Vagina (tissue), 2 donors: ENCODE measurements at regions of chr16 and their contacts with region 1.

Region 1: DNA sequence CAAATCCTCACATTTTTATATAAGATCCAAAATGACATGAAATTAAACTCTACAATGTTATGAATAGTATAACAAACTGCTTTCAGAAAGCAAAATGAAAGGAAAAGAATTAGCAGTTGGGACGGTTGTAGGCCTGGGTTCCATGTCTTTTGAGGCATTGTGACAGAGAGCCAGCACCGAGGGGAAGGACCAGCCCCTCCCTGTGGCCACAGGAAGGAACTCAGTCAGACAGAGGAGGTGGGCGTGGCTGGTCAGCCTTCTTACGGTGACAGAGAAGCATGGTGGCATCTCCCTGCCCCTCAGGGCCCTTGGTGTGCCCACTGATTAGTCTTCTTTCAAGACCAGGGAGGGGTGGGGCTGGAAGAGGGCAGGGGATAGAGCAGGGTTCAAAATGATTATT is 5.7 kb downstream of the ZNF319 start:
- DNase-seq: no peak
- H3K4me3 ChIP-seq: no peak overlapping the region
- H3K27ac ChIP-seq: no peak overlapping the region
- H3K4me1 ChIP-seq: peaks cover 33% of the 10 kb centered on the region
- H3K27me3 ChIP-seq: no peaks in the 10 kb centered on the region
- CTCF ChIP-seq: peak in 1 of 3 experiments; percentile 11
- POLR2A ChIP-seq: no peak

Region 2: DNA sequence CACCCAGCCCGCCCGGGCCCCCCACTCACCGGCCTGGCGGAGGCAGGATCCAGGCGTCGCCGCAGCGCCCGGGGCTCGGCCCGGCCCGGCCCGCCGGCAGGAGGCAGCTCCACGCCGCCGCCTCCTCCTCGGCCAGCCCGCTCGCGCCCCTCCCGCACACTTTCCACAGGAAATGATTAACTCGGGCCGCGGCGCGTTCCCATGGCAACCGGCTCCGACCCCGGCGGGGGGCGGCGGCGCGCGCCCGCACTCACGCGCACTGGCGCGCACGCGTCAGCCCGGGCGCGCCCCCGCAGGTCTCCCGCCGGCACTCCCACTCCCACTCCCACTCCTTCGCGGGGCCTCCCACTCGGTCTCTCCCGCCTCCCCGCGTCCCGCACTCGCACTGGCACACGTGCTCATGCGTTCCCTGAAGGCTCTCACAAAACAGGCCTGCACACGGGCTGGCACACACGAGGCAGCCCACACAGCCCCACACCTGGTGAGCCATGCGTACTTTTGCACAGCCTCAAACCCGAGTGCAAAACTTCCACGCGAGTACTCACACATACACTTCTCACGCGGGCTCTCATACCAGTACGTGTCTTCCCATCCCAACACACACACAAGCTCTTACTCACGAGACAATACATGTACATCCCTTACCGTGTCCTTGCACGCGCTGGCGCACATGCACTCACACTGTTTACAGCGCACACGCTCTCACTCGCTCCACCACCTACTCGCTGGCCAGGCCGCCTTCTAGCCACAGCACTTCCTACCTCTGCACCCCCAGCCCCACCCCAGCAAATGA is 192.2 kb before region 1 on chr16 and contains the start of gene KIFC3:
- intact Hi-C with region 1: loop called (anchors 5 kb)
- DNase-seq: no peak
- H3K4me3 ChIP-seq: peak within 1 kb of the TSS; percentile 69 to 74
- H3K27ac ChIP-seq: peak within 1 kb of the TSS; percentile 93
- H3K4me1 ChIP-seq: peaks cover 61% of the 10 kb centered on the region
- H3K27me3 ChIP-seq: no peaks in the 10 kb centered on the region
- CTCF ChIP-seq: no peak
- POLR2A ChIP-seq: peak in 1 of 2 donors; percentile 23
- total RNA-seq, gene KIFC3: 36.8 TPM

Region 3: GRCh38 chr16:58098207-58099096 is 103.7 kb after region 1 on chr16:
- intact Hi-C with region 1: no loop called
- DNase-seq: no peak
- H3K4me3 ChIP-seq: no peak overlapping the region
- H3K27ac ChIP-seq: no peak overlapping the region
- H3K4me1 ChIP-seq: no peaks in the 10 kb centered on the region
- H3K27me3 ChIP-seq: no peaks in the 10 kb centered on the region
- CTCF ChIP-seq: no peak
- POLR2A ChIP-seq: no peak

Region 4: DNA sequence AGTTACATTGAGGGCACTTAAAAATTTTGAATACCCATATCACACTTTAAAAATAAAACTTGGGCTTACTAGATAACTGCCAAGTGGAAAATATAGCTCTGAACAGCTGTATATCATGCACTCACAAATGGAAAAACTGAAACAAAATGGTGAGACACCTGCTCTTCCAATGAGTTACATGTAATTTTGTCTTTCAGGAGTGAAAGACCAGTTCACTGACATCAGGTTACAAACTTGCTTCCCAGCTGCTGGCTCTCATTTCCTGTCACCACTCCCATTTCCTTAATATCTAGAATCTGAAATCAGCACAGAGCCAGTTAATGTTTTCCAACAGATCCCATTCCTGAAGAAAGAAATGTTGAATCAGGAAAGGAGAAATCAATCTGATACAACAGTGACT is 192.3 kb after region 1 on chr16:
- intact Hi-C with region 1: no loop called
- DNase-seq: no peak
- H3K4me3 ChIP-seq: no peak overlapping the region
- H3K27ac ChIP-seq: no peak overlapping the region
- H3K4me1 ChIP-seq: no peaks in the 10 kb centered on the region
- H3K27me3 ChIP-seq: no peaks in the 10 kb centered on the region
- CTCF ChIP-seq: no peak
- POLR2A ChIP-seq: no peak